Ascending aorta (tissue), 2 donors: ENCODE measurements at regions of chr17 and their contacts with region 1.

Region 1: DNA sequence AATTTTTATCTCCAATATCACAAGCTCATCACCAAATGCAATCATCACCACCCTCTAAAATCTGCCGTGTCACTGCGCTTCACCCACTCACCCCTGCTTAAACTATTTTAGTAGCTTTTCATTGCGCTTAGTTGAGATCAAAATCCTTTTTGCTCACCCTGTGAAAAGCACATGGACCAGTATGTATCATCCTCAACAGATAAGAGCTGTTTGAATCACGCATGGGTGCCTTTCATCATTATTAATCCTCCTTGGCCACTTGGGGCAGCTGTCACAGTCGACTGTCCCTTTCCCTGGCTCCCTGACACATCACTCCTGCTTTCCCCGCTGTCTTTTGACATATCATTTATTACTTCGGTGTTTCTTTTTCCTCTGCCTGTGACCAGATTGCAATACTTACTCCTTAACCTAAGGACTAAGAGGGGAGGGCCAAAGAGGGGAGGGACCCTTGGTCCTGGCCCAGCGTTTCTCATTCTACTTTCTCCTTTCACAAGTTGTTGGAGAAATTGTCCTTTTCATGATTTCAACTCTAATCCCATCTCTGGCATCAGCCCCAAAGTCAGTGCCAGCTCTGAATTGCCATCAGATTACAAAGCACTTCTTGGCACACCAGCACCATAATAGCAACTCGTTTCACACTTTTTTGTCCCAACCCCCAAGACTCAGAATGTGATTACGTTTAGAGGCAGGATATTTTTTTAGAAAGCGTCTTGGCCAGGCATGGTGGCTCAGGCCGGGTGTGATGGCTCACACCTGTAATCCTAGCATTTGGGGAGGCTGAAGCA is 8.6 kb upstream of the KDM6B start:
- DNase-seq: no peak
- H3K4me3 ChIP-seq: no peak overlapping the region
- H3K27ac ChIP-seq: no peak overlapping the region
- H3K4me1 ChIP-seq: peaks cover 0 to 6% of the 10 kb centered on the region in 2 donors
- H3K27me3 ChIP-seq: no peaks in the 10 kb centered on the region
- CTCF ChIP-seq: no peak

Region 2: GRCh38 chr17:7740481-7741001 is 84.9 kb before region 1 on chr17:
- intact Hi-C with region 1: loop called (anchors 2 kb)
- DNase-seq: no peak
- H3K4me3 ChIP-seq: no peak overlapping the region
- H3K27ac ChIP-seq: no peak overlapping the region
- H3K4me1 ChIP-seq: no peaks in the 10 kb centered on the region
- H3K27me3 ChIP-seq: no peaks in the 10 kb centered on the region
- CTCF ChIP-seq: no peak

Region 3: DNA sequence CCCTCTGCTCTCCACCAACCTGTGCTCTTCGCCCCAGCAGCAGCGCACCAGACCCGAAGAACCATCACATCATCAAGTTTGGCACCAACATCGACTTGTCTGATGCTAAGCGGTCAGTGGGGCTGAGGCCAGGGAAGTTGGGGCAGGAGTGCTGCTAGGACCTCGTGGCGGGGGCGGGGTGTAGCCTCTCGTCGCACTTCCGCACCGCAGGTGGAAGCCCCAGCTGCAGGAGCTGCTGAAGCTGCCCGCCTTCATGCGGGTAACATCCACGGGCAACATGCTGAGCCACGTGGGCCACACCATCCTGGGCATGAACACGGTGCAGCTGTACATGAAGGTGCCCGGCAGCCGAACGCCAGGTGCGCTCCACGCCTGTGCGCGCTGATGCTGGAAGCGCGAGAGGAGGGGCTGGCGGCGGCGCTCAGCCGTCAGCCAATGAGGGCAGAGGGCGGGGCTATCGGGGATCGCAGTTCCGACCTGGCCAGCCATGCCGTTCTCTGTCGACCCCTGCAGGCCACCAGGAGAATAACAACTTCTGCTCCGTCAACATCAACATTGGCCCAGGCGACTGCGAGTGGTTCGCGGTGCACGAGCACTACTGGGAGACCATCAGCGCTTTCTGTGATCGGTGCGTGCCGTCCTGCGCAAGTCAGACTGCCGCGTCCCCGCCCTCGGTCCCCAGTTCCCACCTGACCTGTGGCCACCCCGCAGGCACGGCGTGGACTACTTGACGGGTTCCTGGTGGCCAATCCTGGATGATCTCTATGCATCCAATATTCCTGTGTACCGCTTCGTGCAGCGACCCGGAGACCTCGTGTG is 26.2 kb after region 1 on chr17:
- intact Hi-C with region 1: loop called (anchors 1 kb)
- DNase-seq: peak in 1 of 2 donors; percentile 91
- H3K4me3 ChIP-seq: peak overlapping the region in 1 of 2 donors; percentile 41
- H3K27ac ChIP-seq: no peak overlapping the region
- H3K4me1 ChIP-seq: peaks cover 12 to 18% of the 10 kb centered on the region in 2 donors
- H3K27me3 ChIP-seq: no peaks in the 10 kb centered on the region
- CTCF ChIP-seq: peak; percentile 98 to 99 (median 99)

Region 4: GRCh38 chr17:7989781-7990655 is 164.6 kb after region 1 on chr17:
- intact Hi-C with region 1: loop called (anchors 2 kb)
- DNase-seq: peak; percentile 41 to 90
- H3K4me3 ChIP-seq: peak overlapping the region; percentile 60 to 79
- H3K27ac ChIP-seq: peak overlapping the region in 1 of 2 donors; percentile 34
- H3K4me1 ChIP-seq: no peaks in the 10 kb centered on the region
- H3K27me3 ChIP-seq: no peaks in the 10 kb centered on the region
- CTCF ChIP-seq: peak; percentile 91 to 98 (median 96)

Region 5: DNA sequence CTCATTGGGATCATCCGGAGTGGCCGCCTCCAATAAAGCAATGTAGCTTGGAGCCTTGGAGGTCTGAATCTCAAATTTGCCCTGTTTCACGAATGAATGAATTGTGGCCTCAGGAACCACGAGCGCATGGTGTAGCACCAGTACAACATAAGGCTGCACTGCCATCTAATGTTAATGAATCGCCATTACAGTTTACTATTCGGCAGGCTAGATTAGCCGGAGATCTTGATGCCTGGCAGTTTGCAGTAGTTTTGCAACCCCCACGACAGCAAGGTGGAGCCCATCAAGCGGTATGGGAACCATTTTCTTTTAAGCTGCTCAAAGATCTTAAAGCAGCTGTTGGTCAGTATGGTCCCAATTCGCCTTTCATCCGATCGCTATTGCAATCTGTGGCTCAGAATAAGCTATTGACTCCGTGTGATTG is 232.3 kb after region 1 on chr17:
- intact Hi-C with region 1: loop called (anchors 10 kb)
- DNase-seq: peak in 1 of 2 donors; percentile 74
- H3K4me3 ChIP-seq: no peak overlapping the region
- H3K27ac ChIP-seq: no peak overlapping the region
- H3K4me1 ChIP-seq: peaks cover 0 to 3% of the 10 kb centered on the region in 2 donors
- H3K27me3 ChIP-seq: peaks cover 8% of the 10 kb centered on the region
- CTCF ChIP-seq: peak; percentile 69 to 78 (median 74)